ENCODE measurements at regions of chr2 and their contacts with region 1.

Region 1: GRCh38 chr2:127479219-127479825 is 47.0 kb downstream of the IWS1 start:
- DNase-seq: no peak
- ATAC-seq: no peak
- H3K4me3 Mint-ChIP-seq: no peak overlapping the region
- H3K27ac Mint-ChIP-seq: no peak overlapping the region
- H3K4me1 Mint-ChIP-seq: no peaks in the 10 kb centered on the region
- H3K27me3 Mint-ChIP-seq: no peaks in the 10 kb centered on the region
- CTCF ChIP-seq: no peak

Region 2: DNA sequence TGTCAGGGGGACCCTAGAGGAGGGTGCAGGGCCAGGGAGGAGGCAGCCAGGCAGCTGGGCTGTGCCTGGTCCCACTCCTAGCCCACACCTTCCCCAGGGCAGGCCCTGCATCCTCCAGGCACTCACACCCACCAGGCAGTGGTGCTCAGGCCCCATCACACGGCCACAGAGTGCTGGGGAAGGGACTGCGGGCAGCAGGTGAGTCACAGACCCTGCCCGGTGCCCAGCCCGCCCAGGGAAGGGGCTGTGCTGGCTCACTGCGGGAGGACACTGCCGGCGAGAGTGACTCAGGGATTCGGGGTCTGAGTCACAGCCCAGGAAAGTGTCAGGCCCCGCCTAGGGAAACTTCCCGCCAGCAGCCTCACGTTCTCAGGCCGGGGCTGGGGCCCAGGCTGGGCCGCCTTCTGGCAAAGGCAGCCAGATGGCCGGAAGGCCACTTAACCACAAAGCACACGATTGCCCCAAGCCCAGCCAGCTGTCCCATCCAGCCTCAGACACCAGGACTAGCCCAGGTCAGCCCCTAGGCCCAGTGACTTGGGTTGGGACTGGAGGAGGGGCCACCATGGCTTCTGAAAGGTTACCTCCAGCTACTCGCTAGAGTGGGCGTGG is 414.6 kb before region 1 on chr2:
- CTCF ChIA-PET with region 1: interaction called, 12 read pairs
- POLR2A ChIA-PET with region 1: interaction called, 3 read pairs
- intact Hi-C with region 1: loop called (anchors 1 kb)
- DNase-seq: no peak
- ATAC-seq: peak; percentile 78
- H3K4me3 Mint-ChIP-seq: no peak overlapping the region
- H3K27ac Mint-ChIP-seq: no peak overlapping the region
- H3K4me1 Mint-ChIP-seq: peaks cover 13% of the 10 kb centered on the region
- H3K27me3 Mint-ChIP-seq: no peaks in the 10 kb centered on the region
- CTCF ChIP-seq: no peak

Region 3: GRCh38 chr2:127277028-127277427 is 202.3 kb before region 1 on chr2:
- CTCF ChIA-PET with region 1: interaction called, 5 read pairs
- POLR2A ChIA-PET with region 1: no interaction called
- intact Hi-C with region 1: loop called (anchors 5 kb)
- DNase-seq: no peak
- ATAC-seq: peak; percentile 50
- H3K4me3 Mint-ChIP-seq: no peak overlapping the region
- H3K27ac Mint-ChIP-seq: peak overlapping the region; percentile 56
- H3K4me1 Mint-ChIP-seq: peaks cover 23% of the 10 kb centered on the region
- H3K27me3 Mint-ChIP-seq: no peaks in the 10 kb centered on the region
- CTCF ChIP-seq: no peak

Region 4: DNA sequence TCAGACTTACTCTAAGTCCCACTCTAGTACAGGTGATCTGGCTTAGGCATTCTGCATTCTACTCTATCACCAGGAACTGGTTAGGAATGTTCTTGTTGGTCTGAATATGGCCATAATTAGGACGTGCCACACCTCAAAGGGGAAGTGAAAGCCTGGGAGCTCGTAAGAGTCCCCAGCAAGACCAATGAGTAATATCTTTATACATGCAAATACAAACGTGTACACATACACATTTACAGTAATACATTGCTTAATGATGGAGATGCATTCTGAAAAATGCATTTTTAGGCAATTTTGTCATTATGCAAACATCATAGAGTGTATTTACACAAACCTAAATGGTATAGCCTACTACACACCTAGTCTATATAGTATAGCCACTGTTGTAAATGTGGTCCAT is 165.9 kb before region 1 on chr2:
- CTCF ChIA-PET with region 1: interaction called, 11 read pairs
- POLR2A ChIA-PET with region 1: no interaction called
- intact Hi-C with region 1: no loop called
- DNase-seq: no peak
- ATAC-seq: peak; percentile 95
- H3K4me3 Mint-ChIP-seq: no peak overlapping the region
- H3K27ac Mint-ChIP-seq: no peak overlapping the region
- H3K4me1 Mint-ChIP-seq: peaks cover 18% of the 10 kb centered on the region
- H3K27me3 Mint-ChIP-seq: no peaks in the 10 kb centered on the region
- CTCF ChIP-seq: no peak

Region 5: DNA sequence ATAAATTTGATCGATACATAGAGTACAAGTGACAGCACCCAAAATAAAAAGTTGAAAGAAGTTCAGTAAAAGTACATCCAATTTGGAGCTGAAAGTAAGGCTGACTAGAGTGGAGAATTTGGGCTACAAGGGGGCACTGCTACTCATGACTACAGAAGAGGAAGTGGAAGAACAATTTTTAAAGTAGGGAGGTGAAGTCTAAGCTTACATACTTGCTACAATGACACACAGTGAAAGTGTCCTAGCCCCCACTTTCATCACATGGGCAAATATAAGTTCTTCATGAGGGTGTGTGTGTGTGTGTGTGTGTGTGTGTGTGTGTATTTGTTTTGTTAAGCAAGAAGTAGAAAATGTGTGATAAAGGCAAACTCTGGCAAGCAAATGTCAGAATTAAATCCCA is 137.2 kb before region 1 on chr2:
- CTCF ChIA-PET with region 1: interaction called, 12 read pairs
- POLR2A ChIA-PET with region 1: no interaction called
- intact Hi-C with region 1: loop called (anchors 5 kb)
- DNase-seq: no peak
- ATAC-seq: peak; percentile 77
- H3K4me3 Mint-ChIP-seq: no peak overlapping the region
- H3K27ac Mint-ChIP-seq: peak overlapping the region; percentile 22
- H3K4me1 Mint-ChIP-seq: peaks cover 38% of the 10 kb centered on the region
- H3K27me3 Mint-ChIP-seq: no peaks in the 10 kb centered on the region
- CTCF ChIP-seq: no peak

Region 6: DNA sequence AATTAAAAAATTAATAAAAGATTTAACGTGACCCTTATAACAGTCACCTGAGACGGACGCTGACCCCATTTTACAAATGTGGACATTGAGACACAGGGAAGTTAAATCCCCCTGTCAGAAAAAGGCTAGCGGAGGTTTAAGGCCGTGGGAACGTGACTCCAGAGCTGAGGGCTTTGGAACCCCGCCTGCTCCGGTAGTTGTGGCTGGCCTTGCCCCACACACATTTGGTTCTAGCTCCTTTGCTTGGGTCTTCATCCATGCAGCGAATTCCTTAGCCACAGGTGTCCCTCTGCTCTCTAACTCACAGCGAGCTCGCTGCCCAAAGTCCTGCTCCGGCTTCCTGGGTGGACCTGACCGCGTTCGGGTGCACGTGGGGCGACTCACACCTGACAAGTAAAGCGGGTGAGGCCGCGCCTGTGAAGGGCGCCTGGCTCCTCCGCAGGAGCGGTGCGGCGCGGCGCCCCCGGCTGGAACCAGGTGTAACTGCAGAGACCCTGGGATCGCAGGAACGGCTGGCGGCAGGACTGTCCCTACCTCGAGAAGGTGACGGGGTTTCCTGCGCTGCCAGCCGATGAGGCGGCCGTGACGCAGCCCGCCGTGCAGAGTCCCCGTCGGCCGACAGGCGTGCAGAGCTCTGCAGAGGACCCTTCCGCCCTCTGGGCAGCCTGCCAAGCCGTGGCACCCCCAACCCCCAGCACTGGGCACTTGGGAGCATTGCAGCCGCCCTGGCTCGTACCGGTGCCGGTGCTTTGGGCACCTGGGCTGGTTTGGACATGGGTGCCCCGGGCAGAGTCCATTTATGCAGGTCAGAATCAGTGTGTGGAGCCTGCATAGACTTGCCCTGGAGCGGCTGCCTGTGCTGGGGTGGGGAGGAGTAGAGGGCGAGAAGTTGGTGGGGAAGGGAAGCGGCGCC is 63.5 kb before region 1 on chr2:
- CTCF ChIA-PET with region 1: interaction called, 9 read pairs
- POLR2A ChIA-PET with region 1: no interaction called
- intact Hi-C with region 1: loop called (anchors 5 kb)
- DNase-seq: peak; percentile 72
- ATAC-seq: peak; percentile 93
- H3K4me3 Mint-ChIP-seq: peak overlapping the region; percentile 80
- H3K27ac Mint-ChIP-seq: no peak overlapping the region
- H3K4me1 Mint-ChIP-seq: peaks cover 49% of the 10 kb centered on the region
- H3K27me3 Mint-ChIP-seq: no peaks in the 10 kb centered on the region
- CTCF ChIP-seq: no peak

Measured in activated B cell treated with CpG ODN at 0.5 μM for 24 hours (primary cell).